Aorta (tissue), 5 donors: ENCODE measurements at regions of chr21 and their contacts with region 1.

Region 1: DNA sequence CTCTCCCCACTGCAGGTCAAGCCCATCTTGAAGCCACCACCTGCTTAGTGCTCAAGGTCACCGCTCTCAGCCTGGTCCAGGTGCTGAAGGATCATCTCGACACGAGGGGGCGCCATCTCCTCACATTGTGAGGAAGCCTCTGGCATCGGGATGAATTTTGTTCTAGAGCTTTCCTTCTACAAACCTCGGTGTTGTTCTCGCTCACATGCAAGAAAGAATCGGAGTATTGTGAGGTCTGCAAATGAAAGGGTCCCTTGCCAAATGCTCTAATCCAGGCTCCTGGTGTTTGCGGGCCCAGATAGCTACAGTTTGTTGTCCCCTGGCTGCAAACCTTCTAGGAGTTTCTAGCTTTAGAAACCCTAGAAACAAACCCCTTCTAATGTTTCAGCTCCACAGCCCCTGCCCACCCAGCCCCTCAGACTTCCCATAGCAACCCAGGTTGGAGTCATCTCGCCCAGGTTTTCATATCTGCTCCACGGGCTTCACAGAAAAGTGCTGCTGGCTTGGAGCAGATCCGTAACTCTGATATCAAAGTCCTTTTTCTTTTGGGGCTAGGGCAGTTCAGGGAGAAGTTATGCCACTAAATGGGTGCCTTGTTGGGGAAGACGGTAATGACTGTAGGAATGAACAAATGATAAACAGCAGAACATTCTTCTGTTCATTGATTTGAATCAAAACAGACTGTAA is 8.6 kb upstream of the ATP5PO start:
- DNase-seq: peak; percentile 91 to 97
- ATAC-seq: peak; percentile 94
- H3K4me3 ChIP-seq: no peak overlapping the region
- H3K27ac ChIP-seq: no peak overlapping the region
- H3K4me1 ChIP-seq: no peaks in the 10 kb centered on the region
- H3K27me3 ChIP-seq: no peaks in the 10 kb centered on the region

Region 2: GRCh38 chr21:33866826-33867225 is 57.4 kb before region 1 on chr21:
- intact Hi-C with region 1: no loop called
- DNase-seq: peak in 1 of 2 donors; percentile 5
- ATAC-seq: no peak
- H3K4me3 ChIP-seq: no peak overlapping the region
- H3K27ac ChIP-seq: no peak overlapping the region
- H3K4me1 ChIP-seq: no peaks in the 10 kb centered on the region
- H3K27me3 ChIP-seq: no peaks in the 10 kb centered on the region

Region 3: GRCh38 chr21:34351786-34352241 is 427.6 kb after region 1 on chr21:
- intact Hi-C with region 1: loop called (anchors 2 kb)
- DNase-seq: no peak
- ATAC-seq: peak; percentile 76
- H3K4me3 ChIP-seq: no peak overlapping the region
- H3K27ac ChIP-seq: no peak overlapping the region
- H3K4me1 ChIP-seq: no peaks in the 10 kb centered on the region
- H3K27me3 ChIP-seq: no peaks in the 10 kb centered on the region